ENCODE measurements at regions of chr1 and their contacts with region 1.

Region 1: DNA sequence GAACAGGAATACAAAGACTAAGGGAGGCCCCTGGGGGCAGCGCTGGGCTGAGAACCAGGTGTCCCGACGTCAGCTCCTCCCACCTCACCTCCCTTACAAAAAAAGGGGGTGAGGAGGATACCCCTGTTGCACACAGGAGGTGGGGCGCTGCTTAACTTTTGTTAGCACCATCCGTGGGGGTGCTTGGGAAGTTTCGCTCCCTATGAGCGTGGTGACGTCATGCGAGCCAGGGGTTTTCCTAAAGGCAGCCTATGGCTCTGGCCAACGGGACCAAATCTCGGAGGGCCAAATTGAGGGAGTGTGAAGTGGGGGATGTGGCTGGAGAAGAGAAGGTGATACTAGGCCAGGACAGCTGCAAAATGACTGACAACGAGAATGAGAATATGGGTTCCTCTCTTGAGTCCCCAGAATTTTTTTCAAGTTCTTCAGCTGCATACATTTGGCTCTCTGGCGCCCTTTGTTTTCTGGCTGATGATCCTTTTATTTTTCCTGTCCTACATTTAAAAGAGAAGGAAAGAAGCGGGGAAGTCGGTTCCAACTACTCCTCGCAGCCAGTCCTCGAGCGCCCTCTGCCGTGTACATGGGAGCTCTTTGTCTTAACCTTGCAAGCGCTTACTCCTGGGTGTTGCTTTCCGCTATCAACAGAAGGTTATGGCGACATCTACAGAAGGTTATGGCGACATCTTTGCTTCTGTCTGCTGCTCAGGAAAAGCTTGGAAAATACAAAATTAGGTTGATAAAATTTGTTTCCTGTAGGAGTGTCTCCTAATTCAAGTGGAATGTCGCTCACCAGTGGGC is 48.0 kb upstream of the ZC3H11B start:
- DNase-seq: peak; percentile 99
- ATAC-seq: peak; percentile 99
- H3K4me3 ChIP-seq: peak overlapping the region; percentile 16; the same call in 1 of the 2 replicates
- H3K27ac ChIP-seq: no peak overlapping the region
- H3K4me1 ChIP-seq: peaks cover 25% of the 10 kb centered on the region
- H3K27me3 ChIP-seq: no peaks in the 10 kb centered on the region
- CTCF ChIP-seq: peak; percentile 99

Region 2: GRCh38 chr1:218299416-218299815 is 1361.4 kb before region 1 on chr1:
- CTCF ChIA-PET with region 1: no interaction called
- POLR2A ChIA-PET with region 1: no interaction called
- intact Hi-C with region 1: loop called (anchors 1 kb)
- DNase-seq: peak; percentile 80
- ATAC-seq: peak; percentile 86
- H3K4me3 ChIP-seq: no peak overlapping the region
- H3K27ac ChIP-seq: no peak overlapping the region
- H3K4me1 ChIP-seq: peaks cover 13% of the 10 kb centered on the region; the same call in 1 of the 2 replicates
- H3K27me3 ChIP-seq: no peaks in the 10 kb centered on the region
- CTCF ChIP-seq: peak; percentile 92

Region 3: GRCh38 chr1:219209578-219209977 is 451.3 kb before region 1 on chr1:
- CTCF ChIA-PET with region 1: no interaction called
- POLR2A ChIA-PET with region 1: no interaction called
- intact Hi-C with region 1: loop called (anchors 2 kb)
- DNase-seq: peak; percentile 23
- ATAC-seq: peak; percentile 48
- H3K4me3 ChIP-seq: no peak overlapping the region
- H3K27ac ChIP-seq: peak overlapping the region; percentile 3
- H3K4me1 ChIP-seq: peaks cover 16% of the 10 kb centered on the region
- H3K27me3 ChIP-seq: no peaks in the 10 kb centered on the region
- CTCF ChIP-seq: no peak

Region 4: DNA sequence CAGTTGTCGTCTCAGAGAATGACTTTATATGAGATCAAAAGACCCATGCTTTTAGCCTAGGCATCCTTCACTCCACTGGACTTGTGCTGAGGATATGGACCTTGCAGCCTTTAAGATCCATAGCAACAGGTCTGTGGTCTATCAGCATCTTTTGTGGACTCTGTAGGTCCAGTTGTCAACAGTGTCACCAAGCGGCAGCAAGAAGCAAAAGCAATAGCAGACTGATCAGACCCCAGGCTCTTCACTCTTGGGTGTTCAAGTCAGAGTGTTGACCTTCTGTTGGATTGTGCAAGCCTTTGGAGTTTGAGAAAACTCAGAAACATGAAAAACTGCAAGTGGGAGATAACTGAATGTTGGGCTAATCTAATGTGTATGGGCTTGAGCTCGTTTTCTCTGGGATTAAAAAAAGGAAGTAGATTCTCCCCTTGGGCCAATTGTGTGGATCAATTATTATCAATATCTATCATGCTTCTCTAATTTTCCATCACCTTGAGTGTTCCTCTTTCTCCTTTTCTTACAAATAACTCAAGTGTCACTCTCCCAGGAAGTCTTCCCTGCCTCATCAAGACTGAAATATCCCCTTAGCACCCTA is 343.0 kb before region 1 on chr1:
- CTCF ChIA-PET with region 1: no interaction called
- POLR2A ChIA-PET with region 1: no interaction called
- intact Hi-C with region 1: loop called (anchors 5 kb)
- DNase-seq: peak; percentile 82
- ATAC-seq: peak; percentile 59
- H3K4me3 ChIP-seq: no peak overlapping the region
- H3K27ac ChIP-seq: no peak overlapping the region
- H3K4me1 ChIP-seq: peaks cover 16% of the 10 kb centered on the region
- H3K27me3 ChIP-seq: no peaks in the 10 kb centered on the region
- CTCF ChIP-seq: peak; percentile 98

Region 5: DNA sequence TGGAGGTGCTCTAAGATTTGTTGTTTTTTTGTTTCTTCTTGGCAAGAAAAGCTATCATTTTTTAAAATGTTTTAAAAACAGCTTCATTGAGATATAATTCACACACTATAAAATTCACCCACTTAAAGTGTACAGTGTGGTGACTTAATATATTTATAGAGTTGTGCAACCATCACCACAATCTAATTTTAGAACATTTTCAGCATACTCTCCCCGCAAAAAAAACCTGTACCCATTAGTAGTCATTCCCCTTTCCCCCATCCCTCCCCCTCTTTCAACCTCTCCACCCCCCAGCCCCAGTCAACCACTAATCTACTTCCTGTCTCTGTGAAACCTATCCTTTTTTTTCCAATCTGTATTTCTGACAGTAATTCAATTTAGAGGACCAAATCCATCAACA is 78.6 kb before region 1 on chr1:
- CTCF ChIA-PET with region 1: interaction called, 10 read pairs
- POLR2A ChIA-PET with region 1: no interaction called
- intact Hi-C with region 1: loop called (anchors 1 kb)
- DNase-seq: peak; percentile 86
- ATAC-seq: 0 out of 2 replicates have a peak, but pooled peaks have one; percentile 8
- H3K4me3 ChIP-seq: 0 out of 2 replicates have a peak overlapping the region, but pooled peaks have one; percentile 5
- H3K27ac ChIP-seq: peak overlapping the region; percentile 28
- H3K4me1 ChIP-seq: peaks cover 37% of the 10 kb centered on the region
- H3K27me3 ChIP-seq: no peaks in the 10 kb centered on the region
- CTCF ChIP-seq: no peak

Region 6: GRCh38 chr1:219621047-219621786 is 39.6 kb before region 1 on chr1:
- CTCF ChIA-PET with region 1: no interaction called
- POLR2A ChIA-PET with region 1: no interaction called
- intact Hi-C with region 1: no loop called
- DNase-seq: peak; percentile 29
- ATAC-seq: no peak
- H3K4me3 ChIP-seq: no peak overlapping the region
- H3K27ac ChIP-seq: no peak overlapping the region
- H3K4me1 ChIP-seq: no peaks in the 10 kb centered on the region
- H3K27me3 ChIP-seq: no peaks in the 10 kb centered on the region
- CTCF ChIP-seq: no peak